Left ventricle myocardium superior (tissue), 1 donor: ENCODE measurements at regions of chr15 and their contacts with region 1.

Region 1: DNA sequence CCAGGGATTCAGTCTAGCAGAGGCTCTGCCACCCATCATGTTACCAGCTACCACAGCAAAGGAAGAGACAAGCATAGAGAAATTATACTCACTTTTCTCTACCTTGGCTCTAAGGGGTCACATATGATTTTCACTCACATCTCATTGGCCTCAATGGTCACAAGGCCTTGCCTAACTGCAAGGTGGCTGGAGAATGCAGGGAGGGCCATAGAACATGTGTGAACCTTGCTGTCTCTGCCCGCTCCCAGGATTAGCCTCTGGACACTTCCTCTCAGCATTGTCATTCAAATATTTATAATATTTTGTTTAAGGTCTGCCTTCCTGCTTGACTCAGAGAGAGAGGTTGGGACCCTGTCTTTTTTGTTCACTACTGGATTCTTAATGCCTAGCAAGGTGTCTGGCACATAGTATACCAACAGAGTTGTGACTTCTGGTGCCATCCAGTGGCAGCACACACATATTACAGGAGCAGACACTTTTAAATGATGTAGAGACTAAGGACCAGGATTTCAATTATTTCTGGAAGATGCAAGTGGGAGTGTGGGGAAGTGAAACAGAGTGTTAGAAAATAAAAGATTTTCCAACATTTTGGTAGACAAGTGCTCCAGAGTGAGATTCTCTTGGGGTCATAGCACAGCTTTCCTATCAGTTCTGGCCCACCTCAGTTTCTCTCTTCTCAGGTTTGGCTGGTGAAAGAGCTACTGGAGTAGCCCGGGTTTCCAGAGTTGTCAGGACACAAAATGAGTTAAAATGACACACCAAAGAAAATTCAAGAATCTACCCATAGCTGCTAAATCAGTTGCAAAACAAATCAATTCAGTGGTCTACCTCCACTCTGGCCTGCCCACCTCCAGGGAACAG is 119.0 kb upstream of the RASGRP1 start:
- DNase-seq: peak; percentile 47
- ATAC-seq: peak; percentile 74

Region 2: DNA sequence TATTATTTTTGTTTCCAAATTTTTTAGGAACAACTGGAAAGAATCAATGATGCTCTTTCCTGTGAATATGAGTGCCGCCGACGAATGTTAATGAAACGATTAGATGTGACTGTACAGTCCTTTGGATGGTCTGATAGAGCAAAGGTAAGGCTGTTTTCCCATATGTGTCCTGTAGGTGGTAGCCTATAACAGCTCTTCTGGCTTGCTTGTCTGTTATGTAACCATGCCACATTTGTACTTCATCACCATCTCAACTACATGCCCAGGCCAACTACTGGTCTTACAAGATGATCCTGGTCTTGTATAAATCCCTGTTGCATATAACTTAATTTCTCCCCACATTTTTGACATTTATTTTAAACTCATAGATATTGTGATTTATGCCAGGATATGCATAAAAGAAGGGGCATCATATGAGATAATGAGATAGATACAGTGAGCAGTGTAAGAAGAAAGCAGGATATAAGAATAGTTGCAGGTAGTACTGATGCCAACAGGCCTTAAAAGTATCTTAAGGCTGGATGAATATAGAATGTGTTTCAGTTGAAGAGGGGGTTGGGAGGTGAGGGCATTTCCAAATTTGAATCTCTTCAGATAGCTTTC is 209.4 kb before region 1 on chr15:
- intact Hi-C with region 1: loop called (anchors 10 kb)
- DNase-seq: no peak
- ATAC-seq: peak; percentile 91

Region 3: DNA sequence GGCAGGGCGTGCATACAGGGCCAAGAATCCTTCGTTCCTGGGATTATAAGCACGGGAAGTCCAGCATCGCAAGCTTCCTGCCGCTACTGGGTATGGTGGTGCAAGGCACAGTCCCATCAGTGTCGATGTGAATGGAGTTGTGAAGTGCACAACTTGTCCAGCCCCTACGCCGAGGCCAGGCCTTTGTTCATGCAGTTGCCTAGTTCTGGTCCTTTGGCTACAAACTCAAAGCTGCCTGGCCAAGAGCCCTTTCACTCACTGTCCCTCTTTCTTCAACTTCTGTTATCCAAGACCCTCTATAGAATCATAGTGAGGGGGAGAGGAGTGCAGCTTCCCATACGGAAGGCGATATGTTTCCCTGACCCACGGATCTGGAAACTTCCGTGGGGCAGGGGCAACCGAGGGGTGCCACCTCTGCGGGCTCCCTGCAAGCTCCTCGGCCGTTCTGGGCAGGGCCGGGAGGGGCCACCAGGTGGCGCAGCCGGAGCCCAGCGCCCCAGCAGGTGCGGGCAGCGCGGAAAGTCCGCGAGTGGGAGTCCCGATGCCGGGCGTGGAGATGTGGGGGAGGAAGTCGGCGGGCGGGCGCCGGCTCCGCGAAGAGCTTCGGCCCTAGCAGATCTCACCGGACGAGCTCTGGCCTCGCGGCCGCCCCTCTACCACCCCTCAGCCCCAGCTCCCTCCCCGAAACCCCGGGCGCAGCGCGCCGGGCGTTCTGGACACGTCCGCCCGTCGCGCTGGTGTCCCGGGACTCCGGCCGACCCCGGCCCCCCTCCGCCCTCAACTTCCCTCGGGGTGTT is 119.7 kb before region 1 on chr15:
- intact Hi-C with region 1: loop called (anchors 5 kb)
- DNase-seq: peak; percentile 83
- ATAC-seq: peak; percentile 95

Region 4: GRCh38 chr15:39059917-39060316 is 376.3 kb after region 1 on chr15:
- intact Hi-C with region 1: no loop called
- DNase-seq: no peak
- ATAC-seq: no peak